Prostate gland (tissue), 2 donors: ENCODE measurements at regions of chr19 and their contacts with region 1.

Region 1: GRCh38 chr19:8321060-8321985 is at the starts of genes NDUFA7 and RPS28:
- DNase-seq: peak; percentile 97
- H3K4me3 ChIP-seq: peak within 1 kb of the TSS; percentile 72 to 94
- H3K27ac ChIP-seq: peak within 1 kb of the TSS; percentile 84 to 88
- H3K4me1 ChIP-seq: peaks cover 4% of the 10 kb centered on the region
- H3K27me3 ChIP-seq: no peaks in the 10 kb centered on the region
- CTCF ChIP-seq: peak in 3 of 4 experiments; percentile 33 to 74 (median 57)
- POLR2A ChIP-seq: peak; percentile 92
- total RNA-seq, gene NDUFA7: 39.6 to 52.6 TPM
- total RNA-seq, gene RPS28: 488 to 498 TPM

Region 2: DNA sequence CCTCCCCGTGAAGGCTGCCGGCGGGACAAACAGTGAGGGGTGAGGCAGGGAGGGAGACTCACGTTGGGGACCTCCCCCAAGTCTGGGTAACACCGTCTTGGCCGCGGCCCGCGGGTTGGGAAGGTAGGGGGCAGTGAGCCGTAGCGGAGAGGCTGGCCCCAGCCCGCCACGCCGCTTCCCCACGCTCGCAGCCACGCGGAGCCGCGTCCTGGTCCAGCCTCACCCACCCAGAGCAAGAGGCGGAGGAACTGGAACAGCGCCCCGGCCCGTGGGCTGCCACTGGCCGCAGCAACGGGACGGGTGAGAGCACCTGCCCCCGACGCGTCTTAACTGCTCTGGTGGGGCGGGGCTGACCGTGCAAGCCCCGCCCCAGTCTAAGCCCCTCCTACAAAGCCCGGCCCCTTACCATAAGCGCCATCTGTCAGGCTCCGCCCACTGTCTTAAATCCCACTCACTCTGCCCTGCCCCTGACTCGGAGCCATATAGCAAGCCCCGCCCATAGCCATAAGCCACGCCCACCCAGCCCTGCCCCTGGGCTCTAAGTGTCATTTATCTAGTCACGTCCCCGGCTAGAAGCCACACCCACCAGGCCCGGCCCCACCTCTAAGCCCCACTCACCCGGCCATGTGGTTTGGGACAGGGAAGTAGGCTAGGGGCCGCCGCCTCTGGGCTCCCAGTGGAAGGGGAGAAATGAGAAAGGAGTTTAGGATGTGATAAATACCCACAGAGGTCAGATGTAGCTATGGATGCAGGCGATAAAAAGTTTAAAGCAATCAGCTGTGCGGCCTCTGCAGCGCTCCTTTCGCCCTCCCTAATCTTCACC is 270.8 kb before region 1 on chr19:
- intact Hi-C with region 1: no loop called
- DNase-seq: peak; percentile 28
- H3K4me3 ChIP-seq: peak overlapping the region; percentile 9 to 18
- H3K27ac ChIP-seq: no peak overlapping the region
- H3K4me1 ChIP-seq: no peaks in the 10 kb centered on the region
- H3K27me3 ChIP-seq: no peaks in the 10 kb centered on the region
- CTCF ChIP-seq: no peak
- POLR2A ChIP-seq: no peak

Region 3: DNA sequence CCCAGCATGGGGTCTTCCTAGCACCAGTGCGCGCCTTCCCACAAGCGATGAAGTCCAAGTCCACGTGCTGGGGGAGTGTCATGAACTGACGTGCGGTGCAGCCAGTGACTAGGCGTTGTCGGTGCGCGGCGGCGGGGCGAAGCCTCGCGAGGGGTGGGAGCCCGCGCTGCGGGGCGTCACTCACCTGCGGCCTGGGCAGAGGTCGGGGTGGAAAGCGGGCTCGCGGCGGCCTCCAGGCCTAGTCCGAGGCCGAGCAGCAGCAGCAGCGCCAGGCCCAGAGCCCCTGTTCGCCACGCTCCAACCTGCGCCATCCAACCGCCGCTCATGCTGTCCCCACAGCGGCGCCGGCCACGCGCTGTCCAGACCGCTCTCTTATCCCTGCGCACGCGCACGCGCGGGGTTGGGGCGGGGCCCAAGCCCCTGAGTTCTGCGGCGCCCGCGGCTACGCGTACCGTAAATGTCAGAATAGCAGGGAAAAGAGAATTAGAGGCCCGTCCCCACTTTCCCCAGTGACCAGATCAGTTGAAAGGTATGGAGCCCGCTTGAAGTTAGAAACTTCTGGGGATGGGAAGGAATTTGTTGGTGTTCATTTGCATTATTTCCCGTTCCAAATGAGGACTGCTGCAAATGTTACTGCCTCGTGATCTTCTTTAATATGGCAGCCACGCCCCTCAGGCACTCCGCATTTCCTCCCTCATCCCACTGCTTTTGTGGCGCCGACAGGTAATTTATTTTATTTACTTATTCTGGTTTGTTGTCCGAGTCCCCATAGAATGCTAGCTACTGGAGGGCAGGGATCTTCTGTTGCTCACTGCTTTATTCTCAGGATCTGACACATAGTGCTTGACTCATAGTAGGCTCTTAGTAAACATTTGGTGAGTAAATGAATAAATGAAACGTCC is 13.1 kb before region 1 on chr19 and contains the start of gene CD320:
- intact Hi-C with region 1: loop called (anchors 1 kb)
- DNase-seq: peak; percentile 89
- H3K4me3 ChIP-seq: peak within 1 kb of the TSS; percentile 50 to 60
- H3K27ac ChIP-seq: peak within 1 kb of the TSS; percentile 54 to 66
- H3K4me1 ChIP-seq: peaks cover 12% of the 10 kb centered on the region
- H3K27me3 ChIP-seq: no peaks in the 10 kb centered on the region
- CTCF ChIP-seq: peak in 1 of 4 experiments; percentile 26
- POLR2A ChIP-seq: peak; percentile 51
- total RNA-seq, gene CD320: 50.8 to 91.4 TPM

Region 4: GRCh38 chr19:8363803-8364771 is 42.8 kb after region 1 on chr19 and contains the start of gene ANGPTL4:
- intact Hi-C with region 1: no loop called
- DNase-seq: peak; percentile 75
- H3K4me3 ChIP-seq: peak within 1 kb of the TSS; percentile 36 to 60
- H3K27ac ChIP-seq: peak within 1 kb of the TSS; percentile 69 to 80
- H3K4me1 ChIP-seq: peaks cover 10% of the 10 kb centered on the region
- H3K27me3 ChIP-seq: no peaks in the 10 kb centered on the region
- CTCF ChIP-seq: peak in 2 of 4 experiments; percentile 12 to 46
- POLR2A ChIP-seq: peak; percentile 86
- total RNA-seq, gene ANGPTL4: 25.7 to 26.4 TPM